ENCODE measurements at regions of chr3 and their contacts with region 1.

Region 1: DNA sequence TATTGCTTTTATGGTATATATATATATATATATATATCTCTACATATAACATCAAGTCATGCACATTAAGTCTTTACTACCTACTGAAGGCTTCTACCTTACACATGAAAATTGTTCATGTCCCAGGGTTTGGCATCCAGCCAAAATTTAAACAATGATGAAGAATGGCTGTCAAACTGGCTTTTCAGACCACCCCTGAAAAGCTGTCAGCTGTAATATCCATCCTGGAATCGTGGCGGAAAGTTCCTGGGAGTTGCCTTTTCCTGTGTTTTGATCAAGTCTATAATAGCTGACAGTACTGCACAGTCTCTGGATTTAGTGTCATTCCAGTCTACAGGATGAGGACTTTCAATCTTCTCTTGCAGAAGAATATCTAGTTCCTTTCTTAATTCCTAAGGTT is 48.3 kb downstream of the DHX36 start:
- DNase-seq: peak in 1 of 5 donors; percentile 30
- ATAC-seq: peak in 2 of 4 donors; percentile 55 to 76
- H3K4me3 ChIP-seq: no peak overlapping the region
- H3K27ac ChIP-seq: peak overlapping the region in 5 of 12 donors; percentile 24 to 54 (median 31)
- H3K4me1 ChIP-seq: peaks cover 0 to 36% (median 15%) of the 10 kb centered on the region in 12 donors
- H3K27me3 ChIP-seq: no peaks in the 10 kb centered on the region
- CTCF ChIP-seq: no peak
- POLR2A ChIP-seq: no peak

Region 2: DNA sequence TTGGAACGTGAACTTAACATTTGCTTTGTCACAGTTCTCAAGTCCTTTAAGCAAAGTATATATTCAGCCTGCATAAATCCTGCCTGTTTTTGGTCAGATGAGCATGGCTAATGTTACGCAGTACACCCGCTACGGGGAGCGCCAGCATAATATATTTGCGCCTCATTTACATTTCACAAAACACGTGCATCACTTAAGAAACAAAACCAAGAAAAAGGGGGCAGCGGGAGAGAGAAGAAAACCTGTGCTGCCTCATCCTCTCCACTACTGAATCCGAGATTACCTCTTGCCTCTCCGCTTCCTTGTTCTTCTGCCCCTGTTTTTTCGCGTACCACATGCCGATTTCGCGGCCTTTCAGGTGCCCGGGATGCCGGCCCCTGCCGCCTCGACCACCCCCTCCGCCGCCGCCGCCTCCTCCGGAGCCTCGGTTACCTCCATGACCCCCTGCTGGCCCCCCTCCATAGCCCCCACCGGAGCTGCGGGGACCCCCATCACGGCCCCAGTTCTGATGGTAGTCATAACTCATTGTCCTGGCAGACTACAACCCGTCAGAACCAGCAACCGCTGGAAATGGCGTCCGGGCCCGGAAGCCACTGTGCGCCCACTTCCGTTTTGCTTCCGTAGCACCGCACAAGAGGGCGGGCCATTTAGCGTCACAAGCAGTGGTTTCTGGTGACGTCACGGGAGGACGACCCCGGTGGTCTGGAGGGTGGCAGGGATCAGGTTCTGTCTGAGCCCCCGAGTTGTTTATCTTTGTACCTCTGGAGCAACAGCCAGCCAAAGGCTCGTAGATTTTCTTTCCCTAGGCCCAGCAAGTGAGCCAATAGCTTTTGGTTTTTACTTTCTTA is 48.1 kb after region 1 on chr3 and contains the start of gene DHX36:
- intact Hi-C with region 1: loop called in 1 of 10 experiments (anchors 5 kb)
- DNase-seq: peak; percentile 90 to 93 (median 90)
- ATAC-seq: peak; percentile 92 to 99 (median 98)
- H3K4me3 ChIP-seq: peak within 1 kb of the TSS; percentile 64 to 94 (median 79)
- H3K27ac ChIP-seq: peak within 1 kb of the TSS; percentile 77 to 96 (median 86)
- H3K4me1 ChIP-seq: peaks cover 0 to 51% (median 35%) of the 10 kb centered on the region in 12 donors
- H3K27me3 ChIP-seq: no peaks in the 10 kb centered on the region
- CTCF ChIP-seq: peak in 2 of 12 donors; percentile 9 to 10
- POLR2A ChIP-seq: peak in 1 of 2 donors; percentile 59
- total RNA-seq, gene DHX36: 24.9 to 50.0 (median 37.0) TPM

Measured in heart left ventricle (tissue), 16 donors.